ENCODE measurements at regions of chr20 and their contacts with region 1.

Region 1: GRCh38 chr20:50308513-50309279 is 118.1 kb downstream of the CEBPB start:
- DNase-seq: peak; percentile 96
- H3K4me3 ChIP-seq: peak overlapping the region in 1 of 3 experiments; percentile 7
- H3K27ac ChIP-seq: peak overlapping the region; percentile 90
- H3K4me1 ChIP-seq: peaks cover 59% of the 10 kb centered on the region
- H3K27me3 ChIP-seq: no peaks in the 10 kb centered on the region
- CTCF ChIP-seq: peak in 1 of 2 donors; percentile 36

Region 2: DNA sequence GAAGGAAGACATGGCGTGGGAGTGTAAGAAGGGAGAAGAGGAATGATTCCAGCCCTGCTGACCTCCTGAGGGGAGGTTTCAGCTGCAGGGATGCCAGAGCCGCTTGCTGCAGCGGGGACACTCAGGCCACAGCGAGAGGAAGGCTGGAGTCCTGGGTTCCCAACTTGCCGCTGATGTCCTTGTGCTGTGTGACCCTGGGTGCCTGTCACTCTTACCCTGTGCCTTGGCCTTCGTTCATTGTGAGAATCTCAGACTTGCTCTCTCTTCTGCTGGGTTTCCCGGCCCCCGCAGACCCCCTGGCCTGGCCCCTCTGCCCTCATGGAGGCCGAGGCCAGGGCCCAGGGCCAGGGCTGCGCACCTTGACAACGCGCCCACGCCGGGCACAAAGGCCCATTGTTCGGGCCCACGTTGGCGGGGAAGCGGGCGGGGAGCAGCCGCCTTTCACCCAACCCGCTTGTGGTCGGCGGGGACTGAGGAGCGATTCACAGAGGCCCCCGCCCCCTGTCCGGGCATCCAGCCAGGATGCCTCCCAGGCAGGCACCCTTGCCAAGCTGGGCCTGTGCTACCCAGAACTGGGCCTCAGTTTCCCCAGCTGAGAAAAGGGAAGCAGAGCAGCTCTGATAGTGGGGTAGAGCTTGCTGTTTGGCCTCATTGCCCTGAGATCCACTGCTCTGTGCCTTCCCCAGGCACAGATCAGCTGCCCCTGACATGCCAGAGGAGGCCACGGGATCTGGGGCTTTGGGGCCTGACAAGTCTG is 65.7 kb before region 1 on chr20:
- CTCF ChIA-PET with region 1: no interaction called
- dilution Hi-C with region 1: loop called (anchors 5 kb)
- in situ Hi-C with region 1: no loop called
- intact Hi-C with region 1: loop called (anchors 5 kb)
- DNase-seq: peak; percentile 93
- H3K4me3 ChIP-seq: no peak overlapping the region
- H3K27ac ChIP-seq: peak overlapping the region; percentile 87
- H3K4me1 ChIP-seq: peaks cover 64% of the 10 kb centered on the region
- H3K27me3 ChIP-seq: no peaks in the 10 kb centered on the region
- CTCF ChIP-seq: no peak

Region 3: DNA sequence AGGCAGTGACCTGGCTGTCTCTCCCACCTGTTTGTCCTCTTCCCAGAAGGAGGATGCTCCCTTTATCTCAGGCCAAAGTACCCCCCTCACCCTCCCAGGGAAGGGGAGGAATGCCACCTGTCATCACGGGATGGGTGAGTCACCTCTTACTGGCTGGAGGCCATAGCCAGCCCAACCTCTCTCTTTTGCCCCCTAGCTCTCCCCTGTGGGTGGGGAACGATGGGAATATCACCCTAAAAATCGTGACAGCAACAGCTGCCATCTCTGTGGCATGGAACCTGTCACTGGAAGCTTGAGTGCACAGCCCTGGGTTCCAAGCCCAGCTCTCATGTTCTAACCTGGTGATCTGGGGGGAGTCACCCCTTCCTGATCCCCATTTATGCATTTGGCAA is 64.1 kb after region 1 on chr20:
- CTCF ChIA-PET with region 1: no interaction called
- dilution Hi-C with region 1: no loop called
- in situ Hi-C with region 1: no loop called
- intact Hi-C with region 1: loop called (anchors 5 kb)
- DNase-seq: peak; percentile 28
- H3K4me3 ChIP-seq: no peak overlapping the region
- H3K27ac ChIP-seq: no peak overlapping the region
- H3K4me1 ChIP-seq: peaks cover 42% of the 10 kb centered on the region
- H3K27me3 ChIP-seq: no peaks in the 10 kb centered on the region
- CTCF ChIP-seq: no peak